Heart right ventricle (tissue), 16 donors: ENCODE measurements at regions of chr12 and their contacts with region 1.

Region 1: GRCh38 chr12:936377-937345 is 12.8 kb downstream of the RAD52 start:
- DNase-seq: no peak
- ATAC-seq: peak in 1 of 8 donors; percentile 37
- H3K4me3 ChIP-seq: no peak overlapping the region
- H3K27ac ChIP-seq: no peak overlapping the region
- H3K4me1 ChIP-seq: peaks cover 0 to under 1% (median 0%) of the 10 kb centered on the region in 9 donors
- H3K27me3 ChIP-seq: no peaks in the 10 kb centered on the region
- CTCF ChIP-seq: no peak

Region 2: DNA sequence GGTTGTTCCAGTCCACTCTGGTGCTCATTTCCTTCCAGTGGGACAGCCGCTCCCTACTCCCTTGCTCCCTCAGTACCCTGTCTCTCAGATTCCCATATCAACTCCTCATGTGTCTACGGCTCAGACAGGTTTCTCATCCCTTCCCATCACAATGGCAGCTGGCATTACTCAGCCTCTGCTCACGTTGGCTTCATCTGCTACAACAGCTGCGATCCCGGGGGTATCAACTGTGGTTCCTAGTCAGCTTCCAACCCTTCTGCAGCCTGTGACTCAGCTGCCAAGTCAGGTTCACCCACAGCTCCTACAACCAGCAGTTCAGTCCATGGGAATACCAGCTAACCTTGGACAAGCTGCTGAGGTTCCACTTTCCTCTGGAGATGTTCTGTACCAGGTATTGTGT is 57.0 kb before region 1 on chr12:
- intact Hi-C with region 1: loop called in 1 of 10 experiments (anchors 10 kb)
- DNase-seq: no peak
- ATAC-seq: peak in 1 of 8 donors; percentile 47
- H3K4me3 ChIP-seq: no peak overlapping the region
- H3K27ac ChIP-seq: no peak overlapping the region
- H3K4me1 ChIP-seq: no peaks in the 10 kb centered on the region
- H3K27me3 ChIP-seq: no peaks in the 10 kb centered on the region
- CTCF ChIP-seq: no peak